ENCODE measurements at regions of chr4 and their contacts with region 1.

Region 1: DNA sequence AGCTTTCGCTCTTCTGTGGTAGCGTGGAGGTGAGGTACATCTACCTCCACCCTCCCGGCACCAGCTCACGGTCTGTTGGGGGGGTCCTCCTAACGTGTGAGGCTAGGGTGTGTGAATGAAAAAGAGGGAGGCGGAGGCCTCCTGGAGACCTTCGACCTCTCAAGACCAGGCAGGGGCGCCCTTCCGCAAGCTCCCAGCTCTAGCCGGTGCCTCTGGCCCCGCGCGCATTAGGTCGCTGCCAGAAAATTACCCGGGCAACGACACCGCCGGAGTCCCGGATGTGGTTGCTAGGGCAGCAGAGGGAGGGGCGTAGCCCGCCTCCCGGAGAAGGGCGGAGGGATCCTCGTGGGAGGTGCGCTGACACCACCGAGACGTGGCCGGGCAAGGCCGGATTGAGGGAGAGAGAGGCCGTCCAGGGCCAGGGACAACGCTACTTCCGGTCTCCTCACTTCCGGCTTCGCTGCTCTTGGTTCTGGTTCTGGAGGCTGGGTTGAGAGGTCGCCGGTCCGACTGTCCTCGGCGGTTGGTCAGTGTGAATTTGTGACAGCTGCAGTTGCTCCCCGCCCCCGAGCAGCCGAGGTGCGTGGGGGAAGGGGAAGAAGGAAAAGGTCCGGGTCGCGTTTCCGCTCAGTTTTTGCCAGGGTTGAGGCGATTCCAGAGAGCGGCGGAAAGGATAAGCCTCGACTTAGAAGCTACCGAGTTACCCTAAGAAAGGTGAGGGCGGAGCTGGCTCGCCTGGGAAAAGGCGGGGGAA is at the starts of genes ARFIP1 and TIGD4:
- DNase-seq: peak; percentile 98
- H3K4me3 ChIP-seq: peak within 1 kb of the TSS; percentile 66 to 79
- H3K27ac ChIP-seq: peak within 1 kb of the TSS; percentile 93 to 95
- H3K4me1 ChIP-seq: peaks cover 11% of the 10 kb centered on the region
- H3K27me3 ChIP-seq: no peaks in the 10 kb centered on the region
- CTCF ChIP-seq: peak in 3 of 4 experiments; percentile 14 to 36 (median 28)
- POLR2A ChIP-seq: peak; percentile 69
- total RNA-seq, gene ARFIP1: 34.7 to 38.9 TPM
- total RNA-seq, gene TIGD4: 0.28 to 0.64 TPM

Region 2: DNA sequence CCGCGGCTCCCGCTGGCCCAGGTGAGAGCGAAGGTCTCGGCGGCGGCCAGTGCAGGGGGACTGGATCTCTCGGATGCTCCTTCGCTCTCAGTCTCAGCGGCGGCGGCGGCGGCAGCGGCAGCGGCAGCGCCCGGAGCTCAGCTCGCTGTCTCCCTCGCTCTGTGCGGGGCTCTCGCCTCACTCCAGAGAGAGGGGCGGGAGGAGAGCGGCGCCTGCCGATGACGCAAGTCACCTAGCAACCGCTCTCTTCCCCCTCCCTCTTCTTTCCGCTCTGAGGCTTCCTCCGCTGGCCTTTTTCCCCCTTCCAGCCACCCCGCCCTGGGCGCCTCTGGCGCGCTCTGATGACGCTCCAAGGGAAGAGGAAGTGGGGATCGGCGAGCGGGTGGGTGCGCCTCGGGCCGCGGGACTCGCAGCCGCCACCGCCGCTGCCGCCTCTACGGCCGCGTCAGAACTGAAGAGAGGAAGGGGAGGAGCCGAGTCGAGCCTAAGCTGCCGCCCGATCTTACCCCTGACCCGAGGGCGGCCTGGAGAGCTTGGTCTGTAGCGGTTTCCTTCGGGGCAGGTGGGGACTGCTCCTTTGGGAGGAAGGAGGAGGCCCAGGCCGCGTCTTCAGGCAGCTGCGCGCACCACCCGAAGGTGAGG is 243.7 kb before region 1 on chr4 and contains the start of gene FBXW7:
- intact Hi-C with region 1: loop called (anchors 10 kb)
- DNase-seq: peak; percentile 98
- H3K4me3 ChIP-seq: peak within 1 kb of the TSS; percentile 84 to 87
- H3K27ac ChIP-seq: peak within 1 kb of the TSS; percentile 80 to 86
- H3K4me1 ChIP-seq: peaks cover 6% of the 10 kb centered on the region
- H3K27me3 ChIP-seq: no peaks in the 10 kb centered on the region
- CTCF ChIP-seq: peak in 2 of 4 experiments; percentile 10 to 31
- POLR2A ChIP-seq: peak; percentile 90
- total RNA-seq, gene FBXW7: 21.8 to 24.9 TPM

Region 3: DNA sequence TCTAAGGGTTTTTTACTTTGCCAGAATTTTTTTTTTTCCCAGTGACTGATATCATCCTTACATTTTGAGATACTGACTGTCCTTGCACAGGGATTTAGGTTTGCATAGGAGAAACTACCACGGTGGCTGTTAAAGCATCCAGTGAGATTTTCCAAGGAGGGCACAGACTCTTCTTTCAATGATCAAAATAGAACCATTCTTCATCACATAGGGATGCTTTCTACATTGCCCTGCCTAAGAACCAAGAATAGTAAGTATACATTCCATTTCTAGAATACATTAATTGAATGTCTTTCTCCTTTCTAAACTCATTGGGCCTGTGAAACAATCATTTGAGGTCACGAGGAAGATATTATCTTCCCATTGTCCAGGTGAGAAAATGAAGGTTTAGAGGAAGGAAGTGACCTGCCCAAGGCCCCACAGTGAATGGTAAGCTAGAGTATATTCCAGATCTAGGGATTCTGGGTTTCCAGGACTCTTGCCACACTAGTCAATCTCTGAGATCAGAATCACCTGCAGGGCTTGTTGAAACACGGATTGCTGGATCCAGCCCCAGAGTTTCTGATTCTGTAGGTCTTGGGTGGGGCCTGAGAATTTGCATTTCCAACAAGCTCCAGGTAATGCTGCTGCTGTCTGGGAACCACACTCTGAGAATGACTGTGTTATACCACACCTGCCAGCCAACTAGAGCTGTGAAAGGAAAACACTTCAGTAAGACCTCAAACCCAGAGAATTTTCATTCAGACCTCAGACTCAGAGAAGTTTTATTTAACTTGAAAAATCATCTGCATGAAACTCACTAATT is 82.2 kb before region 1 on chr4:
- intact Hi-C with region 1: no loop called
- DNase-seq: no peak
- H3K4me3 ChIP-seq: no peak overlapping the region
- H3K27ac ChIP-seq: no peak overlapping the region
- H3K4me1 ChIP-seq: no peaks in the 10 kb centered on the region
- H3K27me3 ChIP-seq: no peaks in the 10 kb centered on the region
- CTCF ChIP-seq: no peak
- POLR2A ChIP-seq: no peak

Measured in prostate gland (tissue), 2 donors.